Thyroid gland (tissue), 4 donors: ENCODE measurements at regions of chr7 and their contacts with region 1.

Region 1: GRCh38 chr7:82477733-82478515 is 34.3 kb upstream of the CACNA2D1 start:
- DNase-seq: no peak
- H3K4me3 ChIP-seq: no peak overlapping the region
- H3K27ac ChIP-seq: no peak overlapping the region
- H3K4me1 ChIP-seq: no peaks in the 10 kb centered on the region
- H3K27me3 ChIP-seq: no peaks in the 10 kb centered on the region
- CTCF ChIP-seq: no peak
- POLR2A ChIP-seq: no peak

Region 2: GRCh38 chr7:82234457-82235049 is 243.4 kb before region 1 on chr7:
- intact Hi-C with region 1: loop called (anchors 10 kb)
- DNase-seq: no peak
- H3K4me3 ChIP-seq: no peak overlapping the region
- H3K27ac ChIP-seq: no peak overlapping the region
- H3K4me1 ChIP-seq: no peaks in the 10 kb centered on the region
- H3K27me3 ChIP-seq: no peaks in the 10 kb centered on the region
- CTCF ChIP-seq: peak in 5 of 6 experiments; percentile 31 to 71 (median 58)
- POLR2A ChIP-seq: no peak